ENCODE measurements at regions of chr12 and their contacts with region 1.

Region 1: GRCh38 chr12:89343127-89343526 is 9.2 kb downstream of the DUSP6 start:
- DNase-seq: peak in 1 of 2 donors; percentile 92
- H3K4me3 ChIP-seq: no peak overlapping the region
- H3K27ac ChIP-seq: peak overlapping the region; percentile 30 to 45
- H3K4me1 ChIP-seq: peaks cover 0 to 22% of the 10 kb centered on the region in 2 donors
- H3K27me3 ChIP-seq: no peaks in the 10 kb centered on the region
- CTCF ChIP-seq: no peak

Region 2: GRCh38 chr12:89019408-89020120 is 323.6 kb before region 1 on chr12:
- intact Hi-C with region 1: no loop called
- DNase-seq: peak; percentile 11 to 91
- H3K4me3 ChIP-seq: peak overlapping the region in 1 of 2 donors; percentile 53
- H3K27ac ChIP-seq: no peak overlapping the region
- H3K4me1 ChIP-seq: peaks cover 0 to 4% of the 10 kb centered on the region in 2 donors
- H3K27me3 ChIP-seq: no peaks in the 10 kb centered on the region
- CTCF ChIP-seq: peak; percentile 64 to 84 (median 82)

Region 3: GRCh38 chr12:89261982-89262381 is 81.1 kb before region 1 on chr12:
- intact Hi-C with region 1: no loop called
- DNase-seq: no peak
- H3K4me3 ChIP-seq: no peak overlapping the region
- H3K27ac ChIP-seq: no peak overlapping the region
- H3K4me1 ChIP-seq: no peaks in the 10 kb centered on the region
- H3K27me3 ChIP-seq: no peaks in the 10 kb centered on the region
- CTCF ChIP-seq: no peak

Region 4: DNA sequence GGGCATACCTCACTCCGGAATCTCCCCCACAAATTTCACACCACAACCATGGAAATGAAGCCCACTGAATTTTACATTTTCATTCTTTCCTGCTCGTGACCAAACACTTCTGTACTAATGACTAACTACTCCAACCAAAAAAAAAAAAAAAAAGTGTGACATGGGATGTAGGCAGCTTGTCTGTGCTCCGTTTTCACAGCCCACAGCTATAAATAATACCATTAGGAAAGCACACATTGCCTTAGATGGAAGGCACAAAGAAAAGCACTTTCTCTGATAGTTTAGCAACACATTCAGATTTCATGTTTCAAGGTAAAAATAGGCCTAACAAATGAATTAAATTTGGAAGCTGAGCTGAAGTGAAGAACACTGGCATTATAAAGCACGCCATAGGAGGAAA is 33.3 kb before region 1 on chr12:
- intact Hi-C with region 1: loop called (anchors 2 kb)
- DNase-seq: no peak
- H3K4me3 ChIP-seq: no peak overlapping the region
- H3K27ac ChIP-seq: peak overlapping the region; percentile 67 to 73
- H3K4me1 ChIP-seq: peaks cover 0 to 3% of the 10 kb centered on the region in 2 donors
- H3K27me3 ChIP-seq: no peaks in the 10 kb centered on the region
- CTCF ChIP-seq: no peak